H1 (cell line): ENCODE measurements at regions of chr6 and their contacts with region 1.

Region 1: DNA sequence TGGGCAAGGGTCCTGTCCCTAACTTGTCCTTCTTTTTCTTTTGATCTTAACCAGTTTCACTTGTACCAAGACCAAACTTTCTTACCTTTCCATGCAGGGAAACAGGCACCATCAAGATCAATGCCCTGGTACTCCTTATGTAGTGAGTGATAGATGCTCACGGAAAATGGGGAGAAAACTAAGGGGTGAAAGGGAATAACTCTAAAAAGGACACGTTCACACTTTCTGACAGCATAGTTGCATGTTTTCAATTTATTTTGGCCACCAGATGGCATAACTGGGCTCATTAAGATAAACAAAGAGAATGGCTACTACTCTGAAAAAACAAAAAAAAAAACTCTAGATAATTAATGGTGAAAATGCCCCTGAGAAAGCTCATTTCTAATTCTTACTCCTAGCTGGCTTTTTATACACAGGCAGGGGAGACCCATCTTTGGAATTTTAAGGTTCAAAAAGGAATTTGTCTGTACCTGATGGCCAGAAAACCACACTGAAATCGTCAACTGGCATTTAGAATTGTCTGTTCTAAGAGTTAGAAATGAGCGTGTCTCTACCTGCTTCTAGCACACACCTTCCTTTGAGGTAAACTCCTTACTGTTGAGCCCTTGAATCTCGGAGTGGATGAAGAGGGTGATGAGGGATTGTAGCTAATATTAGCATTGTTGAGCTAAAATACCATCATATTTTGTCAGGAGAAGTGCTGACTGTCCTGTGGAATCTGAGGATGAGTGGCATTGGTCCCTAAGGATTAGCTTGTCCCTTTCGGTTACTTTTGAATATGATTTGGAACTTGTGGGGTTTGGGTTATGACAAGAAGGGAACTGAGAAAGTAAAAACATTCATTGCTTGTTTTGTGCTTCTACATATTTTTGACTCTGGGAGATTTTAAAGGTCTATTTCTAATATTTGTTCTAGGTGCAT is 62.2 kb upstream of the DDR1 start:
- DNase-seq: no peak
- H3K4me3 ChIP-seq: no peak overlapping the region
- H3K27ac ChIP-seq: no peak overlapping the region
- H3K4me1 ChIP-seq: peaks cover 0 to 3% (median 0%) of the 10 kb centered on the region in 4 experiments; a peak in 1 of 7 replicates
- H3K27me3 ChIP-seq: no peaks in the 10 kb centered on the region
- CTCF ChIP-seq: peak in 2 of 3 experiments; percentile 28 to 30; a peak in 2 of 4 replicates
- EP300 ChIP-seq: no peak
- POLR2A ChIP-seq: no peak
- RAD21 ChIP-seq: peak; percentile 27 to 42; a peak in 3 of 4 replicates

Region 2: DNA sequence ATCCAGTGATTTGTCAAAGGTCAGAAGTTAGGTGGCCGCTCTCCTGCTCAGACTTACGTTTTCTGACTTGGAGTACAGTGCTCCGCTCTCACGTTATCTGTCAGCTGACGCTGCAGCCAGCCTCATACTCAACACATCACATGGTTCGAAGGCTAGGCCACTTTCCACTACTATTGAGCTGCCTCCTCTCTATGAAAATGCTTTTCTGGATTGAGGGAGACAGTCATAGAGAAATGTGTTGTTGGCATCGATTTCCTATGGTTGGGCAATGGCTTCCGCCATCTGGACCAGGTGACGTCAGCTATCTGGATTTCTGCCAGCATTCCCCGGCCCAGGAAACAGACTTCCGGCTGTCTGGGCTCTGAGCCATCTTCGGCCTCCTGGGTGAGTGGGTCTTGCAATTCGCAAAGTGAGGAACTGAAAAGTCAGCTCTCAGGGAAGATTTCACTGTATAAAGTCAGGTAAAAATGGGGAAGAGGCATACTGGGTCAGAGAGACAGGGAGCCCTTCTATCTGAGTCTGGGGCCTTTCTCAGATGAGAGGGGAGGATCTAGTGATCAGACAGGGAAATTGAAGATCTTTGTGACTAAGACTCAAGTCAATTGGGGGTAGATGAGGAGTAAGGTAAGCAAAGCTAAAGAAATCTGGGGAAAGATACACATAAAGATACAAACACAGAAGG is 40.2 kb before region 1 on chr6:
- CTCF ChIA-PET with region 1: no interaction called
- POLR2A ChIA-PET with region 1: no interaction called
- DNase-seq: no peak
- H3K4me3 ChIP-seq: no peak overlapping the region
- H3K27ac ChIP-seq: no peak overlapping the region
- H3K4me1 ChIP-seq: no peaks in the 10 kb centered on the region
- H3K27me3 ChIP-seq: 0 out of 7 replicates have a peak, but pooled peaks cover 0 to 3% (median 0%) of the 10 kb centered on the region in 4 experiments
- CTCF ChIP-seq: no peak
- EP300 ChIP-seq: no peak
- POLR2A ChIP-seq: no peak
- RAD21 ChIP-seq: no peak

Region 3: DNA sequence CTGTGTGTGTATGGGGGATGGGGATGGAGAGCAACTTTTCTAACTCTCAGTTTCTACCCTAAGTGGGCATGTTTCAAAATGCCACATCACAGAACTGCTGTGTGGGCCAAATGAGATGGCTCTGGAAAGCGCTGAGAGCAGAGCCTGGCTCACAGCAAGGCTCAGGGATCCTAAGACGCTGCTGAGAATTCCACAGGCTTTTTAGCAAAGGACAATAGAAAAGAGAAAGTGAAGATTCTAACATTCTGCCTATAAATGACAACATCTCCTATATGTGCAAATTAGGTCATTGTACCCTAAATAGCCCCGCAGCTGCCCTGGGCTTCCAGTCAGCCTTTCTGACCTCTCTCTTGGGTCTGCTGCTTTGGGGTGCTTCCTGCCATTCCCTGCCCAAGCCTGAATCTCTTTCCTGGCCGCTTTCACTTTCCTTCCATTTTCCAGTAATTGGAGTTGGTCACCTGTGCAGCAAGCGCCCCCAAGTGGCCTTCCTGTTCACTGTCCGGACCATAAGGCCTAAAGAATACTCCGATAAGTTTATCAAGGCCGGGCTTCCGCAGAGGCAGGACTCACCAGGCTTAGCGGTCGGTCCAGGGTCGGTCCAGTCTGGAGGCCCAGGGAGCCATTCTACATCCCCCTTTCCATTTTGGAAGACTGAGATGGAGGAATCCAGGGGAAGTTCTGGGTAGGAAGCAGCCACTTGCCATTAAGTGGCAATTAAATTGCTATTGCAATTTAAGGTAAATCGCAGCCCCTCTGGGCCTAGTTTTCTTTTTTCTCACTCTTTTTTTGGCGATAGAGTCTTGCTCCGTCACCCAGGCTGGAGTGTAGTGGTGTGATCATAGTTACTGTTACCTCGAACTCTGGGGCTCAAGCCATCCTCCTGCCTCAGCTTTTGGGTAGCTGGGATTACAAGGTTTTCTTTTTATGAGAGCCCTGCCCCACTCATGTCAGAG is 55.6 kb after region 1 on chr6:
- CTCF ChIA-PET with region 1: interaction called, 610 read pairs
- POLR2A ChIA-PET with region 1: interaction called, 452 read pairs
- DNase-seq: peak; percentile 70 to 89
- H3K4me3 ChIP-seq: no peak overlapping the region
- H3K27ac ChIP-seq: no peak overlapping the region
- H3K4me1 ChIP-seq: peaks cover 7 to 32% (median 21%) of the 10 kb centered on the region in 4 experiments
- H3K27me3 ChIP-seq: no peaks in the 10 kb centered on the region
- CTCF ChIP-seq: peak in 2 of 3 experiments; percentile 94 to 95; a peak in 3 of 4 replicates
- EP300 ChIP-seq: peak in 1 of 2 experiments; percentile 46; a peak in 1 of 3 replicates
- POLR2A ChIP-seq: no peak
- RAD21 ChIP-seq: peak; percentile 98 to 99